SK-N-SH (cell line): ENCODE measurements at regions of chrX and their contacts with region 1.

Region 1: GRCh38 chrX:15564981-15565579 is 35.7 kb downstream of the ACE2 start:
- DNase-seq: peak; percentile 27
- H3K4me3 ChIP-seq: no peak overlapping the region
- H3K27ac ChIP-seq: no peak overlapping the region; a peak in 1 of 4 replicates
- H3K4me1 ChIP-seq: peaks cover 0 to 5% of the 10 kb centered on the region in 2 experiments; a peak in 2 of 4 replicates
- H3K27me3 ChIP-seq: peaks cover 7% of the 10 kb centered on the region; the same call in 1 of the 2 replicates
- CTCF ChIP-seq: peak; percentile 69
- EP300 ChIP-seq: no peak
- RAD21 ChIP-seq: peak; percentile 83

Region 2: GRCh38 chrX:15399962-15400391 is 165.1 kb before region 1 on chrX:
- CTCF ChIA-PET with region 1: no interaction called
- POLR2A ChIA-PET with region 1: no interaction called
- DNase-seq: no peak
- H3K4me3 ChIP-seq: no peak overlapping the region
- H3K27ac ChIP-seq: peak overlapping the region in 1 of 2 experiments; percentile 67; a peak in 2 of 4 replicates
- H3K4me1 ChIP-seq: peaks cover 0 to 13% of the 10 kb centered on the region in 2 experiments; a peak in 3 of 4 replicates
- H3K27me3 ChIP-seq: no peaks in the 10 kb centered on the region
- CTCF ChIP-seq: no peak
- EP300 ChIP-seq: no peak
- RAD21 ChIP-seq: no peak

Region 3: DNA sequence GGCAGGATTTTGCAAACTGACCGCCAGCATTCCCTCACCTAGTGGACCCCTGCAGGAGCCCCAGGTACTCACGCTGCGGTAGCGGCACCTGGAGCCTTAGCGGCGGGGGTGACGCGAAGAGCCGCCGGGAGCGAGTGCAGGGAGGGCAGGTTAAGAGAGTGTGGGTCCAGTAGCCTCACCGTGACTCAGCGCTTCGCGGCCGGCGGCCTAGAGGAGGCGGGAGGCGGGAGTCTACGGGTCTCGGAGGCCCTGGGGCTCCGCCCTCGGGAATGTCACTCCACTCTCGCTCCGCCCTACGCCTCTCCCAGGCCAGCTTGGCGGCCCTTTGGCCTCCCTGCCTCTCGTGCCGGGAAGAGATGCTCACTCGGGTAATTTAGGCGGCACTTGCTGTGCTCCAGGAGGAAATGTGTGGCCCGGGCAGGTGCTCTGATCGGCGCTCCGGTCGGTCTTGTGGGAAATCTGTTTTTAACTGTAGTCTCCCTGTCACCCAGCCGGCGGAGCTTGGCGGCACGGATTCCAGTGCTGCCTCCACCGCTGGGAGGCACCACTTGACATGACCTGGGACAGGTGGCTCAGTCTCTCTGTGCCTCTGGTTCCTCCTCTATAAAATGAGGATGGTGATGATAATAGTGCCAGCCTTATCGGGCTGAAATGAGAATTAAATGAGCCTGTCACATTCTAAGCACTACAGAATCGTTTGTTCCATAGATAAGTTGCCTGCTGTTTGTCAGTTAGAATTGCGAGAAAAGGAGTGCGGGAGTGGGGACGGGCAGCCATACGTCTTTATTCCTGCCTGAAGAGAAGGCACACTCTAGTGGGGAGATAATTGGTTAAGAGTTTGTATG is 71.7 kb before region 1 on chrX and contains the start of gene PIR:
- CTCF ChIA-PET with region 1: interaction called, 10 read pairs
- POLR2A ChIA-PET with region 1: no interaction called
- DNase-seq: peak; percentile 83
- H3K4me3 ChIP-seq: peak within 1 kb of the TSS; percentile 63 to 68
- H3K27ac ChIP-seq: peak within 1 kb of the TSS in 1 of 2 experiments; percentile 77; a peak in 2 of 4 replicates
- H3K4me1 ChIP-seq: no peaks in the 10 kb centered on the region; a peak in 1 of 4 replicates
- H3K27me3 ChIP-seq: 0 out of 2 replicates have a peak, but pooled peaks cover 2% of the 10 kb centered on the region
- CTCF ChIP-seq: peak; percentile 62
- EP300 ChIP-seq: no peak
- RAD21 ChIP-seq: peak; percentile 23; the same call in 1 of the 2 replicates
- polyA plus RNA-seq, gene PIR: 12.3 and 13.2 TPM in 2 replicates

Region 4: DNA sequence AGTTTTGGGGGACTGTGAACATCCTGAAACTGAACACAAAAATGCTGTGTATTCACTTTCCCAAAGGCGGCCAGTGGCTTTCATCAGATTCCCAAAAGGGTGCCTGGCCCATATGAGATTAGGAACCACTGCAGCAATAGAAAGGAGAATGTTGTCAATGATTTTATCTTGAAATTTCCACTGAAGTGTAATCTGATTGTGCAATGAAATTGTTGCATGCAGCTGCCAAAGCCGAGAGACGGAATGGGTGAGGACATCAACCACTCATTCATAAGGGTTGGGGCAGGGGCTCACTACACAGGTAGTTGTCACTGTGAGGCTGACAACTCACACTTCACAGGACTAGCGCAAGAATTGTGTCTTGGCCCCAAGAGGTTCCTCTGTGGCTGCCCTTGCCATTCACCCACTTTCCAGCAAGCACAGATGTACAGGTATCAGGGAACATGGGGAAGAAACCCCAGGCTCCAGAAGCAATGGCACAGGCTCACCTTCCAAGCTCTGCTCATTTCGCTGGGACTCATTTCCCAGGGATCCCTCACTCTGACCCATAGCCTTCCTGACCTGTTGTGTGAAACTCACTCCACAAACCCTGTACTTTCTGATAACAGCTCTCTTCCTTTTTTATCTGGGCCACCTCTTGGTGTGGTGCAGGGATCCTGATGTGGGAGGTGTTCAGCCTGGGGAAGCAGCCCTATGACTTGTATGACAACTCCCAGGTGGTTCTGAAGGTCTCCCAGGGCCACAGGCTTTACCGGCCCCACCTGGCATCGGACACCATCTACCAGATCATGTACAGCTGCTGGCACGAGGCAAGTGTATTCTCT is 15.7 kb before region 1 on chrX:
- CTCF ChIA-PET with region 1: no interaction called
- POLR2A ChIA-PET with region 1: no interaction called
- DNase-seq: no peak
- H3K4me3 ChIP-seq: no peak overlapping the region
- H3K27ac ChIP-seq: no peak overlapping the region
- H3K4me1 ChIP-seq: no peaks in the 10 kb centered on the region
- H3K27me3 ChIP-seq: no peaks in the 10 kb centered on the region; the same call in 1 of the 2 replicates
- CTCF ChIP-seq: no peak
- EP300 ChIP-seq: no peak
- RAD21 ChIP-seq: no peak